Caco-2 (cell line): ENCODE measurements at regions of chr1 and their contacts with region 1.

Region 1: GRCh38 chr1:83931658-83932253 is 67.2 kb downstream of the TTLL7 start:
- DNase-seq: peak in 1 of 2 experiments; percentile 15
- H3K4me3 ChIP-seq: no peak overlapping the region
- H3K4me3 Mint-ChIP-seq: no peak overlapping the region
- H3K27ac Mint-ChIP-seq: no peak overlapping the region
- H3K4me1 ChIP-seq: no peaks in the 10 kb centered on the region
- H3K4me1 Mint-ChIP-seq: no peaks in the 10 kb centered on the region
- H3K27me3 ChIP-seq: no peaks in the 10 kb centered on the region
- H3K27me3 Mint-ChIP-seq: no peaks in the 10 kb centered on the region
- CTCF ChIP-seq: peak in 1 of 2 experiments; percentile 50

Region 2: DNA sequence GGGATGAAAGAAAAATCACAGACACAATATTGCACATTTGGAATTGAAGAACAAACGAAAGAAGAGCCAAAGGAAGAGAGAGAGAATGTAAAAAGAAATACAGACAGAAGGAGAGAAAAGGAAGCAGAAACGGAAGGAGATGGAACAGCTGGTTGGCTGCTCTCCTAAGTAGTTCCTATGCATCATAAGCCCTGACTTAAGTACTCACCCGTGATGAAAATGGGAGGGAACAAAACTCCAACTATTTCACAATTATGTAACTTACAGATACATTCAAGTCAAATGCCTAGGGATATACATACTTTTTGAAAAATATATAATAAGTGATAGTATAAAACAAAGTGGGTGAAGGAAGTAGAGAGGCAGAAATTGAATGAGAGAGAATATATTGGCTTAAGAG is 21.3 kb before region 1 on chr1:
- CTCF ChIA-PET with region 1: no interaction called
- POLR2A ChIA-PET with region 1: no interaction called
- intact Hi-C with region 1: no loop called
- DNase-seq: no peak
- H3K4me3 ChIP-seq: no peak overlapping the region
- H3K4me3 Mint-ChIP-seq: no peak overlapping the region
- H3K27ac Mint-ChIP-seq: no peak overlapping the region
- H3K4me1 ChIP-seq: no peaks in the 10 kb centered on the region
- H3K4me1 Mint-ChIP-seq: no peaks in the 10 kb centered on the region
- H3K27me3 ChIP-seq: no peaks in the 10 kb centered on the region
- H3K27me3 Mint-ChIP-seq: no peaks in the 10 kb centered on the region
- CTCF ChIP-seq: no peak

Region 3: DNA sequence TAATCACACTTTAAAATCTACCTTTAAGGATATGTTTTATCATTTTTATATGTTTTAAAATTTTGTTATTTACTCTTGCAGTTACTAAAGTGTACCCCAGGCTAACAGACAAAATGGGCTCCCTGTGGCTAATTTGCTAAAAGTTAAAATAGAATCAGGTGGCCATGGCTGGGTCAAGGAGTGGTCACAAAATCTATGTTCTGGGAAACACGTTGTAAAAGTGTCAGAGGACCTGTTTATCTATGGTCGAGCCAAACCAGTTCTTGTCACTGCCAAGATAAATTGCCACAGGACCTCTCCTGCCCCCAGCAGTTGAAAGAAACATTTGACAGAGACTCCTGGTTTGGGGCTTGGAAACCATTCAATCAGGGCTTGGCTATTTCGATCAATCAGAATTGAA is 88.4 kb after region 1 on chr1:
- CTCF ChIA-PET with region 1: no interaction called
- POLR2A ChIA-PET with region 1: no interaction called
- intact Hi-C with region 1: loop called (anchors 10 kb)
- DNase-seq: peak; percentile 28 to 39
- H3K4me3 ChIP-seq: no peak overlapping the region
- H3K4me3 Mint-ChIP-seq: no peak overlapping the region
- H3K27ac Mint-ChIP-seq: no peak overlapping the region
- H3K4me1 ChIP-seq: peaks cover 11% of the 10 kb centered on the region; the same call in 1 of the 2 replicates
- H3K4me1 Mint-ChIP-seq: peaks cover 5% of the 10 kb centered on the region
- H3K27me3 ChIP-seq: no peaks in the 10 kb centered on the region
- H3K27me3 Mint-ChIP-seq: no peaks in the 10 kb centered on the region
- CTCF ChIP-seq: no peak

Region 4: GRCh38 chr1:84122780-84123382 is 191.1 kb after region 1 on chr1:
- CTCF ChIA-PET with region 1: interaction called, 3 read pairs
- POLR2A ChIA-PET with region 1: no interaction called
- intact Hi-C with region 1: loop called (anchors 1 kb)
- DNase-seq: peak; percentile 24 to 34
- H3K4me3 ChIP-seq: no peak overlapping the region
- H3K4me3 Mint-ChIP-seq: no peak overlapping the region
- H3K27ac Mint-ChIP-seq: no peak overlapping the region
- H3K4me1 ChIP-seq: no peaks in the 10 kb centered on the region
- H3K4me1 Mint-ChIP-seq: no peaks in the 10 kb centered on the region
- H3K27me3 ChIP-seq: no peaks in the 10 kb centered on the region
- H3K27me3 Mint-ChIP-seq: no peaks in the 10 kb centered on the region
- CTCF ChIP-seq: peak; percentile 25 to 49

Region 5: GRCh38 chr1:84181350-84182005 is 249.7 kb after region 1 on chr1:
- CTCF ChIA-PET with region 1: no interaction called
- POLR2A ChIA-PET with region 1: no interaction called
- intact Hi-C with region 1: no loop called
- DNase-seq: no peak
- H3K4me3 ChIP-seq: no peak overlapping the region
- H3K4me3 Mint-ChIP-seq: no peak overlapping the region
- H3K27ac Mint-ChIP-seq: no peak overlapping the region
- H3K4me1 ChIP-seq: no peaks in the 10 kb centered on the region
- H3K4me1 Mint-ChIP-seq: no peaks in the 10 kb centered on the region
- H3K27me3 ChIP-seq: no peaks in the 10 kb centered on the region
- H3K27me3 Mint-ChIP-seq: no peaks in the 10 kb centered on the region
- CTCF ChIP-seq: no peak